Colonic mucosa (tissue), 4 donors: ENCODE measurements at regions of chr6 and their contacts with region 1.

Region 1: GRCh38 chr6:15491255-15491985 is 171.4 kb downstream of the DTNBP1 start:
- DNase-seq: peak; percentile 78
- H3K4me3 ChIP-seq: no peak overlapping the region
- H3K27ac ChIP-seq: no peak overlapping the region
- H3K4me1 ChIP-seq: no peaks in the 10 kb centered on the region
- H3K27me3 ChIP-seq: no peaks in the 10 kb centered on the region
- CTCF ChIP-seq: peak; percentile 85

Region 2: DNA sequence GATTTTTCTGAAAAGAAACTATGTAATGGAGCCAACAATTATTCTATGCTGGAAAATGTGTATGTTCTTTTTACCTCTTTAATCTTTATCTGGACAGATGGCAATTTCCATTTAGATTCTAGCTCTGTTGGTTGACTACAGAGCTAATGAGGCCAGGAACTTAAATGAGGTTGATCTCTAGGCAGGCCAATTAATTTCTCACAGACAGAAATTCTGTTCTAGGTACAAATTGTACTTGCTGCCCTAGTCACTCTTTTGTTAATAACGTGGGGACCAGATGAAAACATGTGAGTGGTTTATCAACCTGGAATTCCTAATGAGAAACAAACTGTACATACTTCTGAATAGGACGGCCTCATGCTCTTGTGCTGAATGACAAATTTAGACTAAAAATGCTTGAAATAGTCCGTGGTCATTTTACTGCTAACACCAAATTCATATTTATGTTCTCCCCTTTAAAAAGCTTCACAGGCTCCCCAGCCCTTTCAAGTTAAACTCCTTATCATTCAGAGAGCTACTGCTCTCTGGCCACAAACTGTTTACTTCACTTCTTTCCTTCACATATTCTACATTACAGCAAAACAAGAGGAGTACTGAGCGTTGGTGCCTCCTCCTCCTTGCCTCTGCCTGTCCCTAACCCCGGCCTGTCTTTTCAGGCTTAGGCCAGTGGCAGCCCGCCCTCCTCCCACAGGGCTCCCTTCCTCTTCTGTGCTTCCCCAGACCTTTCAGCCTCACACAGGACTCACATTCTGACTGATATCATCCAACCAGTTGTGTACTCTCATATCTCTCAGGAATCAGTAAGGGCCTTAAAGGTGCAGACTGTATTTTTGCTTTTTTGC is 130.0 kb after region 1 on chr6:
- intact Hi-C with region 1: loop called (anchors 10 kb)
- DNase-seq: peak; percentile 34
- H3K4me3 ChIP-seq: no peak overlapping the region
- H3K27ac ChIP-seq: no peak overlapping the region
- H3K4me1 ChIP-seq: no peaks in the 10 kb centered on the region
- H3K27me3 ChIP-seq: no peaks in the 10 kb centered on the region
- CTCF ChIP-seq: no peak